T-cell (primary cell): ENCODE measurements at regions of chrX and their contacts with region 1.

Region 1: DNA sequence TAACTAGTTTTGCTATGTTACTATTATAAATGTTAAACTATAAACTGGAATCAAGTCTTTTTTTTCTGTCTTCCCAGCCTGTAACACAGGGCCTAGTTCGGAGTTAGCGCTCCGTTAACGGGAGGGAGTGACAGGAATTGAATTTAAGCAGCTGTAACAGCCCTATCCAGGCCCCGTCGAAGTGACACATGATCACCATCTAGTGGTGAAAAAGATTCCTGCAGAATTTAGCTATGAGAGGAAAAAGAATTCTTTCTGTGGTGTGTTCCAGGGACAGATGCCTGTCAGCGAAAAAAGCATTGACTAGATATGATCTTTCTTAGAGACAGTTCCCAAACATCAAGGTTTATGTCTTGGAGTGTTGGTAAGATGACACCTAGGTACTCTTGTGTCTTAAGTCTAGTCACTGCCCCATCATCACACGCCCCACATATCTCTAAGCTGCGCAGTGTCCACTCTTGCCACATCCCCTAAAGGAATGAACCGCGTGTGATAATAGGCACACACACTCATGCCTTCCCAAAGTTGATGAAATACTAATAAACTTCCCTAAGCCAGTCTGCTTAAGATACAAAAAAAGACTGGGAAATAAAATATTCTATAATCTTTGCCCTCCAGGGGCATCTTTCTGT is 2.0 kb downstream of the GAB3 start:
- DNase-seq: peak in 26 of 35 experiments; percentile 10 to 83 (median 33)
- ATAC-seq: peak; percentile 54 to 71 (median 59)
- H3K4me3 ChIP-seq: peak overlapping the region in 1 of 2 donors; percentile 15
- H3K4me3 Mint-ChIP-seq: peak overlapping the region in 2 of 3 donors; percentile 46 to 56
- H3K27ac ChIP-seq: peak overlapping the region; percentile 29
- H3K27ac Mint-ChIP-seq: peak overlapping the region in 1 of 2 donors; percentile 44
- H3K4me1 ChIP-seq: peaks cover 2 to 27% of the 10 kb centered on the region in 2 experiments
- H3K4me1 Mint-ChIP-seq: peaks cover 21 to 42% (median 34%) of the 10 kb centered on the region in 3 donors
- H3K27me3 ChIP-seq: no peaks in the 10 kb centered on the region
- H3K27me3 Mint-ChIP-seq: peaks cover 0 to 16% of the 10 kb centered on the region in 2 donors

Region 2: DNA sequence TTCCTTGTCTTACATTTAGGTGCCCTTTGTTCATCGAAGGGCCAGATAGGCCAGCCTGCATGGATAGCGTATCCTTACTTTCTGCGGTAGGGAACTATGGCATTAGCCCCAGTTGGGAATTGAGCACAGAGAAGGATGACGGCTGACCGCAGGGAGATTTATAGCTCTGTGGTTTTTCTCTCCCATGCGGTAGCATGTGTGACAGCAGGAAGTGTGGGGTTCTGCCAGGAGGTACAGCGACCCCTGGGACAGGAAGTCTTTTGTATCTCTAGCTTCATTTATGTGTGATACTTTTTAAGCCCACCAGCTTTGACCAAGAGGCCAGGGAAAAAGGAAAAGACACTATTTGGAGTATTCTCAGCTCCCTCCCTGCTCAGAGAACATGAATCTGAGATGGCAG is 31.0 kb before region 1 on chrX:
- CTCF ChIA-PET with region 1: interaction called in 1 of 2 experiments, 27 read pairs
- POLR2A ChIA-PET with region 1: no interaction called
- DNase-seq: peak in 10 of 35 experiments; percentile 15 to 66 (median 24)
- ATAC-seq: peak in 2 of 4 experiments; percentile 21 to 62
- H3K4me3 ChIP-seq: peak overlapping the region in 1 of 2 donors; percentile 25
- H3K4me3 Mint-ChIP-seq: peak overlapping the region; percentile 34 to 78 (median 60)
- H3K27ac ChIP-seq: peak overlapping the region; percentile 73
- H3K27ac Mint-ChIP-seq: peak overlapping the region; percentile 82 to 89
- H3K4me1 ChIP-seq: peaks cover 11 to 49% of the 10 kb centered on the region in 2 experiments
- H3K4me1 Mint-ChIP-seq: peaks cover 42 to 73% (median 49%) of the 10 kb centered on the region in 3 donors
- H3K27me3 ChIP-seq: no peaks in the 10 kb centered on the region
- H3K27me3 Mint-ChIP-seq: peaks cover 0 to 10% of the 10 kb centered on the region in 2 donors

Region 3: GRCh38 chrX:154727871-154728270 is 21.0 kb before region 1 on chrX:
- CTCF ChIA-PET with region 1: interaction called in 1 of 2 experiments, 48 read pairs
- POLR2A ChIA-PET with region 1: interaction called in 1 of 2 experiments, 3 read pairs
- DNase-seq: no peak
- ATAC-seq: no peak
- H3K4me3 ChIP-seq: no peak overlapping the region
- H3K4me3 Mint-ChIP-seq: no peak overlapping the region
- H3K27ac ChIP-seq: no peak overlapping the region
- H3K27ac Mint-ChIP-seq: no peak overlapping the region
- H3K4me1 ChIP-seq: peaks cover 0 to 60% of the 10 kb centered on the region in 2 experiments
- H3K4me1 Mint-ChIP-seq: peaks cover 43 to 94% (median 70%) of the 10 kb centered on the region in 3 donors
- H3K27me3 ChIP-seq: no peaks in the 10 kb centered on the region
- H3K27me3 Mint-ChIP-seq: peaks cover 0 to 8% of the 10 kb centered on the region in 2 donors

Region 4: DNA sequence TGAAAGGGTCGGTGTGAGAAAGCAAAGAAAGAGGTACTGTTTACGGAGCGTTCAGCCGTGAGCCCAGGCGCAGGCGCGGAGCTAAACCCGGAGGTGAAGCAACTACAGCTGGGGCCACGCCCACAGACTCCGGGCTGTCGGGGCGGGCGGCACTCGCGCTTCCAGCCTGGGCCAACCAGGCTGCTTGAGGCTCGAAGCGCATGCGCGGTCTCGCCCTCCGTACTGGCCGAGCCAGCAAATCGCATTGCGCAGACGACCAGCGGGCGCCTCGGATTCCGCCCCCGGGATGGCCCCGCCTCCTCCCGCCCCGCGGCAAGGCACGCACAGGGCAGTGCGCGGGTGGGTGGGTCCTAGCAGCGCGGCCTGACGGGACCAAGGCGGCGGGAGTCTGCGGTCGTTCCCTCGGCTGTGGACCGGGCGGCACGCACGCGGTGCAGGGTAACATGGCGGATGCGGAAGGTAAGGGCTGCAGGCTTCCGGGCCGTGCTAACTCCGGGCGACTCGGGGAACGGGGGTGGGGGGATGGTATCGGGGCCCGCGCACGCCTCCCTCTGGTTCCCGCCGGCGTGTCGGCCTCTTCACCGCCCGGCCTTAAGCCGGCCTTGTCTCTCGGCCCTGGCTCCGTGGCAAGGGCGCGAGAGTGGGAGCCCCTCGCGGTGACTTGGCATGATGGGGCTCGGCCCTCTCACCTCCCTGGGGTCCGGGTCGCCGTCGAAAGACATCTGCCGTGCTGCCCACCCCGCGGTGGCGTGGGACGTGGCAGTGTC is 13.9 kb after region 1 on chrX and contains the start of gene DKC1:
- CTCF ChIA-PET with region 1: interaction called in 1 of 2 experiments, 29 read pairs
- POLR2A ChIA-PET with region 1: no interaction called
- DNase-seq: peak; percentile 82 to 96 (median 92)
- ATAC-seq: peak; percentile 88 to 93 (median 88)
- H3K4me3 ChIP-seq: peak within 1 kb of the TSS; percentile 60 to 70
- H3K4me3 Mint-ChIP-seq: peak within 1 kb of the TSS; percentile 81 to 87 (median 82)
- H3K27ac ChIP-seq: peak within 1 kb of the TSS; percentile 69
- H3K27ac Mint-ChIP-seq: peak within 1 kb of the TSS; percentile 92 to 94
- H3K4me1 ChIP-seq: peaks cover 4 to 19% of the 10 kb centered on the region in 2 experiments
- H3K4me1 Mint-ChIP-seq: peaks cover 20 to 26% (median 26%) of the 10 kb centered on the region in 3 donors
- H3K27me3 ChIP-seq: no peaks in the 10 kb centered on the region
- H3K27me3 Mint-ChIP-seq: no peaks in the 10 kb centered on the region
- total RNA-seq, gene DKC1: 56.5 to 63.2 (median 58.5) TPM

Region 5: DNA sequence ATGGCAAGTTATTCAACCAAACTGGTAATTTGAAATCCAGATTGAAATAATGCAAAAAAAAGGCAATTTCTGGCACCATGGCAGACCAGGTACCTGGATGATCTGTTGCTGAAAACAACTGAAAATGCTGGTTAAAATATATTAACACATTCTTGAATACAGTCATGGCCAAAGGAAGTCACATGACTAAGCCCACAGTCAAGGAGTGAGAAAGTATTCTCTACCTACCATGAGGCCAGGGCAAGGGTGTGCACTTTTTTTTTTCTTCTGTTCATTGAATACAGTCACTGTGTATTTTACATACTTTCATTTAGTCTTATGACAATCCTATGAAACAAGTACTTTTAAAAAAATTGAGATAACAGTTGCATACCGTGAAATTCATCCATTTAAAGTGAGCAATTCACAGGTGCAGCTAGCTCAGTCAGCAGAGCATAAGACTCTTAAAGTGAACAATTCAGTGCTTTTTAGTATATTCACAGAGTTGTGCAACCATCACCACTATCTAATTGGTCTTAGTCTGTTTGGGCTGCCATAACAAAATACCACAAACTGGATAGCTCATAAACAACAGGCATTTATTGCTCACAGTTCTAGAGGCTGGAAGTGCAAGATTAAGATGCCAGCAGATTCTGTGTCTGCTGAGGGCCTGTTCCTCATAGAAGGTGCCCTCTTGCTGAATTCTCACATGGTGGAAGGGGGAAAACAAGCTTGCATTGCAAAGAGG is 61.3 kb after region 1 on chrX:
- CTCF ChIA-PET with region 1: no interaction called
- POLR2A ChIA-PET with region 1: no interaction called
- DNase-seq: peak in 1 of 35 experiments; percentile 20
- ATAC-seq: no peak
- H3K4me3 ChIP-seq: no peak overlapping the region
- H3K4me3 Mint-ChIP-seq: no peak overlapping the region
- H3K27ac ChIP-seq: no peak overlapping the region
- H3K27ac Mint-ChIP-seq: no peak overlapping the region
- H3K4me1 ChIP-seq: peaks cover 0 to 11% of the 10 kb centered on the region in 2 experiments
- H3K4me1 Mint-ChIP-seq: peaks cover 0 to 8% (median 6%) of the 10 kb centered on the region in 3 donors
- H3K27me3 ChIP-seq: peaks cover 0 to 3% of the 10 kb centered on the region in 2 experiments
- H3K27me3 Mint-ChIP-seq: peaks cover 0 to 12% of the 10 kb centered on the region in 2 donors